ENCODE measurements at regions of chr12 and their contacts with region 1.

Region 1: GRCh38 chr12:114935658-114936057 is 251.7 kb upstream of the TBX3 start:
- DNase-seq: no peak
- H3K4me3 ChIP-seq: no peak overlapping the region
- H3K27ac ChIP-seq: no peak overlapping the region
- H3K4me1 ChIP-seq: no peaks in the 10 kb centered on the region
- H3K27me3 ChIP-seq: no peaks in the 10 kb centered on the region
- CTCF ChIP-seq: peak in 1 of 3 donors; percentile 15
- POLR2A ChIP-seq: no peak

Region 2: DNA sequence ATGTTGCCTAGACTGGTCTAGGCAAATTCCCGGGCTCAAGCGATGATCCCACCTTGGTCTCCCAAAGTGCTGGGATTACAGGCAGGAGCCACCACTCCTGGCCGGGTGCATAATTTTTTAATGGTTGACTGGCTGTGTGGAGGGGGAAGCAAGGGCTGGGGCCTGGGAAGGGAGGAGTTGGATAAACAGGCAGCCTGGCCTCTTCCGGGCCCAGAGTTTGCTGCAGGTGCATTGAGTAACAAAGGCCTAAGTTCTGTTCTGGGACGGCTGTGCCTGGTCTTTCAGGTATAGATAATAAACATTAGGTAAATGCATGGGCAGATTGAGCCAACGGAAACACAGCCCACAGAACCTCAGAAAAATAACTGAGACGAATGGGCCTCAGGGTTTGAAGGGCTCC is 60.3 kb before region 1 on chr12:
- intact Hi-C with region 1: no loop called
- DNase-seq: no peak
- H3K4me3 ChIP-seq: no peak overlapping the region
- H3K27ac ChIP-seq: no peak overlapping the region
- H3K4me1 ChIP-seq: no peaks in the 10 kb centered on the region
- H3K27me3 ChIP-seq: no peaks in the 10 kb centered on the region
- CTCF ChIP-seq: no peak
- POLR2A ChIP-seq: no peak

Region 3: DNA sequence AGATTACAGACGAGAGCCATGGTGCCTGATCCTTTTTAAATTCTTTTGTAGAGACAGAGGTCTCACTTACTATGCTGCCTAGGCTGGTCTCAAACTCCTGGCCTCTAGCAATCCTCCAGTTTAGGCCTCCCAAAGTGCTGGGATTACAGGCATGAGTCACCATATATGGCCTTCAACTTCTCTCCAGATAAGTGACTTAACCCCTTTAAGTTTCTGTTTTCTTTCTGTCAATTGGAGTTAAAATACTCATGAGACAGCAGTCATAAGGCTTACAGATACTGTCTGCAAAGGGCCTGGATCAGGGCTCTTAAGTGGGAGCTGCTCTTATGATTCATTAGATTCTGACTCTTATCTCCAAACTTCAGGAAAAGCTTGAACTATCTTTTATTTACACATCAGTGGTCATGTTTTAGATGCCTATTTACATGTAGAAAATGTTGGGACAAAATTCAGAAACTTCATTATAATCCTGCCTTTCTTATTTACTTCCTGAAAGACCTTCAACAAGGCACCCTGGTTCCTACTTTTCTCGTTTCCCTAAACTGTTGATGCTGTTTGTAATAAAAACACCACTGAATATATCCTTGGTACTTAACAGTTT is 19.9 kb after region 1 on chr12:
- intact Hi-C with region 1: loop called (anchors 1 kb)
- DNase-seq: no peak
- H3K4me3 ChIP-seq: no peak overlapping the region
- H3K27ac ChIP-seq: no peak overlapping the region
- H3K4me1 ChIP-seq: no peaks in the 10 kb centered on the region
- H3K27me3 ChIP-seq: no peaks in the 10 kb centered on the region
- CTCF ChIP-seq: no peak
- POLR2A ChIP-seq: no peak

Region 4: GRCh38 chr12:115035535-115036107 is 100.0 kb after region 1 on chr12:
- intact Hi-C with region 1: no loop called
- DNase-seq: no peak
- H3K4me3 ChIP-seq: no peak overlapping the region
- H3K27ac ChIP-seq: no peak overlapping the region
- H3K4me1 ChIP-seq: no peaks in the 10 kb centered on the region
- H3K27me3 ChIP-seq: no peaks in the 10 kb centered on the region
- CTCF ChIP-seq: no peak
- POLR2A ChIP-seq: no peak

Measured in breast epithelium (tissue), 4 donors.